Motor neuron (in vitro differentiated cells): ENCODE measurements at regions of chr12 and their contacts with region 1.

Region 1: DNA sequence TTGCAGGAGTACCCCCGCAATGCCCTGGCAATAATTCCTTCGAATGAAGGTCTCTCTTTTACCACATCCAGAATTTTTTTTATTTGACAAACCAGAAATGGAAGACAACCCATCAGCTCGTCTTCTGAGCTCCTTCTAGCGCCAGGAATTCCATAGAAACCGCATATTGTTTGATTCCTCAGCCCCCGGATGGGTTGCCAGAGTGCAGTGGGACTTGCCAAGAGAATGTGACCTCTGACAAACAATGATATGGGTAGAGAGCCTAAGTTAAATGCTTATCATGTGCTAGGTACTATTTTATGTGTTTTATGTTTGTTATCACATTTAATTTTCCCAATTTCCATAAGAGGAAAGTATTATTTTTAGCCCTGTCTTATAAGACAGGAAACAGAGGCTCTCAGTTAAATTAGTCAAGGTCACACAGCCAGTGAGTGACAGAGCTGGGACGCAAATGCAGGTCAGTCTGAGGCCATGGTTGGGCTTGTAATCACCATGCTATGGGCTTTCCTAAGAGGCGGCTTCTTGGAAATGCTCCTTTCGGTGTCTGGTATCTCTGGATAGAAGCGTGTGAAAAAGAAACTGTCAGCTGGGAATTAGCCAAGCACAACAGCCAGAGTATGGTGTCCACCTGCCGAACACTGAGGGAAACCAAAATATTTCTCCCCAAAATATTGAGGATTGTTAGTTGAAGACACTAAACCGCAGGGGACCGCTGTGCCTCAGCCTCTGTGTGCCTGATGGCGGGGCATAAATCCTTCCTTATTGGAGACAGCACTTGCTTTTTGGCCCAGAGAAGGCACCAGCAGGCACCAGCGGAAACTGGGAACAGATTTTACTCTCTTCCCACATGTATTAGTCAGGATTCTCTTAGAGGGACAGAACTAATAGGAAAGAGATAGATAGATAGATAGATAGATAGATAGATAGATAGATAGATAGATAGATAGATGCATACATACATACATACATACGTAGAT is 29.4 kb upstream of the ETFBKMT start:
- ATAC-seq: peak in 7 of 8 experiments; percentile 28 to 78 (median 60)
- H3K4me3 ChIP-seq: no peak overlapping the region
- H3K27ac ChIP-seq: peak overlapping the region in 1 of 2 donors; percentile 42
- H3K4me1 ChIP-seq: peaks cover 25 to 29% of the 10 kb centered on the region in 2 donors

Region 2: GRCh38 chr12:30661210-30661609 is 968.8 kb before region 1 on chr12:
- in situ Hi-C with region 1: no loop called
- ATAC-seq: no peak
- H3K4me3 ChIP-seq: no peak overlapping the region
- H3K27ac ChIP-seq: no peak overlapping the region
- H3K4me1 ChIP-seq: no peaks in the 10 kb centered on the region

Region 3: DNA sequence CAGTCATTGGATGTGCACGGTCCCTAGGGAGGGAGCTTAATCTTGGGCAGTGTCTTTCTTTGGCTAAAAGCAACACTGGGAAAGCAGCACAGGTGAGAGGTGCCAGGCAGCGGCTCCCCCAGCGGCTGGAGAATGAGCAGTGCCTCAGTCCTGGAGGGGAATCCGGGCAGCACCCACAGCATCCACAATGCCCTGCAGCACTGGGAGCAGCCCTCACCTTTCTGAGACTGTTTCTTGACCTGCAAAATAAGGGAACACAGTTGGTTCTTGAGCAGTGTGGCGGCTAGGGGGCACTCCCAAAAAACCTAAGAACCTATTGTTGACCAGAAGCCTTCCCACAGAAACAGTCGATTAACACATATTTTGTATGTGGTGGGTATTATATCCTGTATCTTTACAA is 379.9 kb before region 1 on chr12:
- in situ Hi-C with region 1: loop called in 1 of 9 experiments (anchors 25 kb)
- ATAC-seq: no peak
- H3K4me3 ChIP-seq: no peak overlapping the region
- H3K27ac ChIP-seq: no peak overlapping the region
- H3K4me1 ChIP-seq: no peaks in the 10 kb centered on the region

Region 4: DNA sequence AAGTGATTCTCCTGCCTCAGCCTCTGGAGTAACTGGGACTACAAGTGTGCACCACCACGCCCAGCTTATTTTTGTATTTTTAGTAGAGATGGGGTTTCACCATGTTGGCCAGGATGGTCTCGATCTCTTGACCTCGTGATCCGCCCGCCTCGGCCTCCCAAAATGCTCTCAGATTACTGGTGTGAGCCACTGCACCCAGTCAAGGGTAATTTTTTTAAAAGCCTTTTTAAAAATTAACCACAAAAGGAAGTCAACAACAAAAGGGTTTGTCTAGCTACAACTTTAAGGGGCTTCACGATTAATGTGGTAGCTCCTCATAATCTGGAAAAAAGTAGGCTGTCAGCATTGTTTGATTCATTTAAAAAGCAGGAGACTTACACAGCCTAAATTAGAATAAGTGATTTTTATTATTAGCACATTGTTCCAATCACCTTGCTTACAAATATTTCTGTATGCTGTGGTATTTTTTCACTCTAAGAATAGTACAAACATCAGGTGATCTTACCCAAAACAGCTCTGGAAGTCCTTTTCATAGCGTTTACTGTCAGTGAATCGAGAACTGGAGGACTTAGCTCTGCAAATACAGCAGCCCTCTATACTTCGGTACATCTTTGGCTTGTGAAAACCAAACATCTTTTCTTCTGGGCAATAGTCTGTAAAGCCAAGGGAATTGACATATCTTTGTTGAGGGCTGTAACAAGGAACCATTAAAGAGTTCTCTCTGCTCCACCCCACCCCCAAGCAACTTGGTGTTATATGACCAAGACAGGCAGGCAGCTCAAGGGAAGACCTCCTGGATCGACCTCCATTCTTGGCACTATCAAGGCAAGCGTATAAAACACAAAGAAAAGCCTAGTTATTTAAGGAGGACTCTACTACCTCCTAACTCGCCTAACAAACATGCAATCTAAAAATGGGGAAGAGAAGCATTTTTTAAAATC is 332.2 kb before region 1 on chr12:
- in situ Hi-C with region 1: loop called in 1 of 9 experiments (anchors 25 kb)
- ATAC-seq: peak in 3 of 8 experiments; percentile 14 to 25 (median 20)
- H3K4me3 ChIP-seq: no peak overlapping the region
- H3K27ac ChIP-seq: no peak overlapping the region
- H3K4me1 ChIP-seq: no peaks in the 10 kb centered on the region

Region 5: DNA sequence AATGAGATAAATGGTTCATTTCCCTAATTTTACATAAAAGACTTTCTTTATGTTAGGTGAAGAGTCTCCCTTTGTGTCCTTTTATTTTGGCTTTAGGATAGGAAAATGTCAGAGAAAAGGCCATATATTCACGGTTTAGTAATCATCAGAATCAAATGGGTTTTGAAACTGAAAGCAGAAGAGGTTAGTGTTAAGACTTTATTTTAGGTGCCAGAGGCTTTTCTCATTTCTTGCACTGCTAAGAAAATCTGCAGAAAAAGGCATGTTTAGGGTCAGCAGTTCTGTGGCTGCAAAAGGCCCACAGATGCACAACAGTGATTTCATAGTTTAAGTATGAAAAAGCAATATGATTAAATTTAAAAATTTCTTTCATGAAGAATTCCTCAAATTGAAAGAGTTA is 223.7 kb before region 1 on chr12:
- in situ Hi-C with region 1: loop called (anchors 5 to 25 kb)
- ATAC-seq: no peak
- H3K4me3 ChIP-seq: no peak overlapping the region
- H3K27ac ChIP-seq: no peak overlapping the region
- H3K4me1 ChIP-seq: peaks cover 0 to 4% of the 10 kb centered on the region in 2 donors

Region 6: GRCh38 chr12:31477687-31478086 is 152.4 kb before region 1 on chr12:
- in situ Hi-C with region 1: no loop called
- ATAC-seq: no peak
- H3K4me3 ChIP-seq: no peak overlapping the region
- H3K27ac ChIP-seq: no peak overlapping the region
- H3K4me1 ChIP-seq: no peaks in the 10 kb centered on the region

Region 7: DNA sequence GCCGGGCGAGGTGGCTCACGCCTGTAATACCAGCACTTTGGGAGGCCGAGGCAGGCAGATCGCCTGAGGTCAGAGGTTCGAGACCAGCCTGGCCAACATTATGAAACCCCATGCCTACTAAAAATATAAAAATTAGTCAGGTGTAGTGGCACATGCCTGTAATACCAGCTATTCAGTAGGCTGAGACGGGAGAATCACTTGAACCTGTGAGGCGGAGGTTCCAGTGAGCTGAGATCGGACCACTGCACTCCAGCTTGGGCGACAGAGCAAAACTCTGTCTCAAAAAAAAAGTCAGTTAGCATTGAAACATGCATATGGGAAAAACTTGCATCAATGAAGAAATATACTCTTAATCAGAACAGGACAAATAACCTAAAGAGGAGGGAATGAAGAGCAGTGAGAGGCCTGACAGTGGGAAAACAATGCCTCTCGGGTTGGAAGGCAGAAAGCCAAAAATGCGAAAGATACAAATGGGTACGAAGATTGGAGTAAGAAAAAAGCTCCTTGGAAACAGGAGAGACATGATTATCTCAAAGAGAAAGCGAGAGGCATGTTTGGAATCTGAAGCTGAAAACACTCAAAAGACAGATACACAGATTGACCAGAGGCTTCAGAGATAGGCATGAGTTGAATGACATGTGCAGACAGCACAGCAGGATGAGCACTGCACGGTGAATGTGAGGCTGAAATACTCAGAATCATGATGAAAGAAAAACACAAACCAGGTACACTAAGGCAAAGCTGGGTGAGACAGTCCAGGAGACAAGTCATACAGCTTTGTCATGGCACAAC is 359.7 kb after region 1 on chr12:
- in situ Hi-C with region 1: no loop called
- ATAC-seq: peak in 1 of 8 experiments; percentile 87
- H3K4me3 ChIP-seq: no peak overlapping the region
- H3K27ac ChIP-seq: no peak overlapping the region
- H3K4me1 ChIP-seq: no peaks in the 10 kb centered on the region